ENCODE measurements at regions of chr10 and their contacts with region 1.

Region 1: GRCh38 chr10:73848821-73849489 is 25.4 kb downstream of the CAMK2G start:
- DNase-seq: peak; percentile 80 to 93 (median 90)
- ATAC-seq: peak; percentile 99
- H3K4me3 Mint-ChIP-seq: peak overlapping the region in 4 of 10 donors; percentile 1 to 28 (median 24)
- H3K27ac Mint-ChIP-seq: peak overlapping the region; percentile 35 to 96 (median 90)
- H3K4me1 Mint-ChIP-seq: peaks cover 13 to 30% (median 23%) of the 10 kb centered on the region in 4 donors
- H3K27me3 Mint-ChIP-seq: no peaks in the 10 kb centered on the region

Region 2: DNA sequence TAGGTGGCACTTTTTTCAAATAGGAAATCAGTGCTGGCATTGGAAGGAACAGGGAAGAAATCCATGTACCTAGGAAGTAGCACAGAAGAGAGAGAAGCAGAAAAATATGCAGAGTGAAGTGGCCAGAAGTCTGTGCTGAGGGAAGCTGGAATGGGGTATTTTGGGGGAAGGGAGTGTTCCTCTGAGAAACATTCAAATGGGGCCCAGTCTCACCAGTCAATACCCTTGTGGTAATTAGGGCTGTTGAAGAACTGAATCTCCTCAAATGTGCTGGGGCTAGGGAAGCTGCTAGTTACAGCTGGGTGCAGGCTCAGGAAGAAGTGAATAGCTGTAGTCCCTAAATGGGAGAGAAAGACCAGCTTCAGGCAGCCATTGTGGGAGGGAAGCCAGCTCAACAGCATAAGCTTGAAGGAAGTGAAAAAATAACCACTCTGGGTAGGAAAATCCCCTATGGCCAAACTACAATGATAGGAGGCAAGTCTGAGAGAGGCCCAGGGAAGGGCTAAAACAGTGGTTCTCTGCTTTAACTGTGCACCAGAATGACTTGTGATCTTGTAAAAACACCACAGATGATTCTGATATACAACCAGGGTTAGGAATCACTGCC is 45.2 kb before region 1 on chr10:
- POLR2A ChIA-PET with region 1: no interaction called
- DNase-seq: no peak
- ATAC-seq: no peak
- H3K4me3 Mint-ChIP-seq: no peak overlapping the region
- H3K27ac Mint-ChIP-seq: peak overlapping the region in 8 of 10 donors; percentile 24 to 92 (median 31)
- H3K4me1 Mint-ChIP-seq: peaks cover 29 to 54% (median 37%) of the 10 kb centered on the region in 4 donors
- H3K27me3 Mint-ChIP-seq: no peaks in the 10 kb centered on the region

Region 3: DNA sequence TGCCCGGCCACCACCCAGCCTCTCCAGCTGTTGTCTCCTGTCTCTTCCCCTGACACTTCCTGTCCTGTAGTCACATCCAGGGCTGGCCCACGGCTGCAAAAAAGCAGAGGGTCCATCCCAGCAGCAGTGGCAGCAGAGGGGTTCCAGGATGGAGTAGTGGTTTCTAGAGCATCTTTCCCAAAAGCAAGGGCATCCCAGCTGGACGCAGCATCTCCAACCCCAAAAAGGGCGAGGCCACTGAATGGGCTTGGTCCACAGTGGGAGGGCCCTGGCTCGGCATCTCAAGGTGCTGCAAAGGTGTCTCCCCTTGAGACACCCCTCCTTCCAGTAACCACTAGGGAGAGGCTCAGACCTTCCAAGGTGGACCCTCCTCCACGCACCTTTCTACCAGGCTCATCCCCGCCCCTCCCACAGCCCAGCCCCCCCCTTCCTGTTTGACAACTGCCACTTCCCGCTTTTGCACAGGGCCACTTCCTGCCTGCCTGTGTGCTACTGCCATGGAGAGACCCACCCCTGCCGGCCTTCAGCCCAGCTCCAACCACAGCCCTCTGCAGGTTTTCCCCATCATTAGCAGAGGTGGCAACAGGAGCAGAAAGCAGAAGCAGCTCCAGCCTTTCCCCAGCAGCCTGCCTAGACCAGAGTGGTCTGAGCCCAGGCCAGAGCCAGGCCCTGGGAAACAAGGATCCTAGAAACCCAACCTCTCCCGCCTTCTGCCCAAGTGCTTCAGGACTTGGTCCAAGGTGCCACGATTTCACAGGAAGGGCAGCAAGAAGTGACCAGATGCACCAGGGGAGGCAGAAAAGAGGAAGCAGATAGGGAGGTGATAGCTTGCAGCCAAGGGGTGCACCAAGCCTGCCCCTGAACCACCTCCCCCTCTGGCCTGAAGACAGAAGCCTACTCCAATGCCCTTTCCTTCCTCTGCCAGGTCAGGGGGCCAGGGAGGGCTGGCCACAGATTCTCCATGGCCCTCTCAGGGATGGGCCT is 16.8 kb after region 1 on chr10:
- POLR2A ChIA-PET with region 1: interaction called, 15 read pairs
- DNase-seq: peak in 8 of 10 donors; percentile 22 to 57 (median 38)
- ATAC-seq: peak; percentile 81 to 82
- H3K4me3 Mint-ChIP-seq: peak overlapping the region; percentile 77 to 94 (median 86)
- H3K27ac Mint-ChIP-seq: peak overlapping the region; percentile 92 to 97 (median 95)
- H3K4me1 Mint-ChIP-seq: peaks cover 37 to 94% (median 91%) of the 10 kb centered on the region in 4 donors
- H3K27me3 Mint-ChIP-seq: no peaks in the 10 kb centered on the region

Region 4: DNA sequence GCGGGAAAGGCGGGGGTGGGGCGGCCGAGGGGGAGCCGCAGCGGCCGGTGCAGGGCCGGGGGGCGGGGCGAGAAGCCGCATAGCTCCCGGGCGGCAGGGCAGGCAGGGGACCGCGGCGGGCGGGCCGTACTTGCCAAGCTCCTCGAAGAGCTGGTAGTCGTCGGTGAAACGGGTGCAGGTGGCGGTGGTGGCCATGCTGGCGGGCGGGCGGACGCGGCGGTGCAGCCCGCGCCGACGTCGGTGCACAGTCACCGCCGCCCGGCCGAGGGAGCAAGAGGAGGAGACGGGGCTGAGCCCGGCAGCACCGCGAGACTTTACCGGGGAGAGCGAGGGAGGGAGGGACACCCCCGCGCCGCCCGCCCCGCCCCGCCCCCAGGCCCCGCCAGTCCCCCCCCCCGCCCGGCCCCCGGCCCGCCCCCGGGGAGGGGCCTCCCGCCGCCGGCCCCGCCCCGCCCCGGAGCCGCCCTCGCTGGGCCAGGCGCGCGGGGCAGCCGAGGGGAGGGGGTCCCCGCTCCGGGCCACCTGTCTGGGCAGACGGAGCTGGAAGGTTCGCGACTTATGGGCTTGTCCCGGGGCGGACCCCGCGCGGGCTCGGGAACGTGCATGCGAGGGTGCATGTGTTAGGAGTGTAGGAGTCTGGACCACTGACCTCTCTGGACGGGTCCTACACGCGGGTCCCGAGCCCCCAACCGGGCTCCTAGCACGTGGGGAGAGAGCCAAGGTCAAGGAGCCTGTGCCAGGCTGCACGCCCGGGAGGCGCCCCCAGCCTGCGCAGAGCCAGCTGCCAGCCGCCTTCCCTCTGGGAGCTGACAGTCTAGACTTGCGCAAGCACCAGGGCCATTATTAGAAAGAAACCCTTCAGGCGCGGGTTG is 25.5 kb after region 1 on chr10 and contains the start of gene CAMK2G:
- POLR2A ChIA-PET with region 1: interaction called, 70 read pairs
- DNase-seq: peak; percentile 75 to 92 (median 78)
- ATAC-seq: peak; percentile 75 to 82
- H3K4me3 Mint-ChIP-seq: peak within 1 kb of the TSS; percentile 87 to 97 (median 94)
- H3K27ac Mint-ChIP-seq: peak within 1 kb of the TSS; percentile 86 to 97 (median 95)
- H3K4me1 Mint-ChIP-seq: peaks cover 46 to 75% (median 73%) of the 10 kb centered on the region in 4 donors
- H3K27me3 Mint-ChIP-seq: no peaks in the 10 kb centered on the region
- polyA plus RNA-seq, gene CAMK2G: 4.6 to 6.7 (median 5.1) TPM

Region 5: DNA sequence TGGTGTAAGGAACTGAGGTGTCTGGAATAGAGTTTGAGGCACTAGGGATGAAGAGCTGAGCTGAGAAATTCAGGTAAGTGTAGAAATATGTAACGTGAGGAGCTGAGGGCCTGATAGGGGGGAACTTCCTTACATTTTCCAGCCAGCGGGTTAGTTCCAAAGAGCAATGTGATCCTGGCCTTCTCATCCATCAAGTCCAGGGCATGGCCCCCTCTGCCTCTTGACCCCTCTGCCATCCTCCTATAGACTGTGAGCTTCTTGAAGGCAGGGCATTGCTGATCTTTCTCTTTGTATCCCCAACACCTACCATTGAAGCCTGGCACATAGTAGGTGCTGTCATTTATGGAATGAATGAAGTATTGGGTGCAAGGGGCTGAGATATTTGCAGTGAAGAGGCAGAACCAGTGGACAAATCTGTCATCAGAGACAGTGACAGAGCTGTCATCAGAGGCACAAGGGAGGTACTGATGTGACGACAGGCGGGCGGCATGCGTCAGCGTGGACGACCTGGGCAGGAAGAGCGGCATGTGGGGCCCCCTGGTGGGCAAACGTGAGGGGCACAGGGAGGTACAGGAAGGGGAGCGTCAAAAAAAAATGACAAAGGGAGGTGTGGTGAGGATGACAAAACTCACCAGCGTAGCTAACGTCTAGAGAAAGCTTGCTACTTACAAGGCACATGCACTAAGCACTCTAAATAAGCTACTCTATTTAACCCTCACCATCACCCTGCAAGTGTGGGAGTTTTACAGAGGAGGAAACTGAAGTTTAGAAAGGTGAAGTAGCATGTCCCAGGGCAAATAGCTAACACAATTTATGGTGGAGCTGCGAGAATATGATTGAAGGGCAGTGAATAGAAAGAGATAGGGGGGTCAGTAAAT is 30.6 kb after region 1 on chr10:
- POLR2A ChIA-PET with region 1: interaction called, 70 read pairs
- DNase-seq: peak; percentile 90 to 97 (median 93)
- ATAC-seq: peak; percentile 85 to 88
- H3K4me3 Mint-ChIP-seq: peak overlapping the region in 2 of 10 donors; percentile 1 to 51
- H3K27ac Mint-ChIP-seq: peak overlapping the region; percentile 41 to 95 (median 82)
- H3K4me1 Mint-ChIP-seq: peaks cover 23 to 43% (median 42%) of the 10 kb centered on the region in 4 donors
- H3K27me3 Mint-ChIP-seq: peaks cover 0 to 2% (median 0%) of the 10 kb centered on the region in 5 donors

Measured in naive thymus-derived CD8-positive, alpha-beta T cell (primary cell).